ENCODE measurements at regions of chr20 and their contacts with region 1.

Region 1: DNA sequence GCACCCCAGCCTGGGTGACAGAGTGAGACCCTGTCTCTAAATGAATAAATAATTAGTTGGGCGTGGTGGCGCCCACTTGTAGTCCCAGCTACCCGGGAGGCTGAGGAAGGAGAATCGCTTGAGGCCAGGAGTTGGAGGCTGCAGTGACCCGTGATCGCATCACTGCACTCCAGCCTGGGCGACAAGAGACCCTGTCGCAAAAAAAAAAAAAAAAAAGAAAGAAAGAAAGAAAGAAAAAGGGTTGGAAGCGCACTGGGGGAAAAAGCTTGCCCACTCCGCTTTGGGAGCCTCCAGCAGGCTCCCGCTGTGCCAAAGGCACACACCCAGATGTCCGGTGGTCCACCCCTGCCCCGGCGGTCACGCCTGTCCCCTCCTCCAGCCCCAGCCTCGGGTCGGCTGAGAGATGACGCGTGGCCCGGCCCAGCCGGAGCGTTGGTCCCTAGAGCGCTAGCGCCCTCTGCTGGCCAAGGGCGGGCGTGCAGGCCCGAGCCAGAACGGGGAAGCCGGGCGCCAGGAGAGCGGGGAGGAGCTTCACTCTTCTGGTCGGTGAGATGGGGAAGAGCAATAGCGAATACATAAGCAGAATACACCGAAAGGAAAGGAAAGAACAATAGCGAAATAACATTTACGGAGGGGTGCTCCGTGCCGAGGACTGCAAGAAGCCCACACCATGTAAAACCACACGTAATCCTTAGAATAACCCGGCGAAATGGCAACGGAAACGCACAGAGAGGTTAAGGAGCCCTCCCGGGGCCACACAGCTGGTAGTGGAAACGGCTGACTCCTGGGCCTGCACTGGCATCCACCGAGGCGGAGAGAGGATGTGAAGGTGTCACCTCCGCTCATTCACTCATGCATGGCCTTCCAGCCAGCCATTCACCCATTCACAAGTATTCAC is 41.7 kb downstream of the UBE2V1 start:
- DNase-seq: no peak
- ATAC-seq: peak; percentile 99
- H3K4me3 ChIP-seq: peak overlapping the region; percentile 37; the same call in 1 of the 2 replicates
- H3K27ac ChIP-seq: no peak overlapping the region
- H3K4me1 ChIP-seq: peaks cover 5% of the 10 kb centered on the region
- H3K27me3 ChIP-seq: no peaks in the 10 kb centered on the region
- CTCF ChIP-seq: peak; percentile 99; a peak in 5 of 6 replicates
- EP300 ChIP-seq: no peak
- POLR2A ChIP-seq: no peak
- RAD21 ChIP-seq: peak; percentile 99

Region 2: GRCh38 chr20:49973995-49974394 is 97.2 kb before region 1 on chr20:
- CTCF ChIA-PET with region 1: interaction called, 369 read pairs
- POLR2A ChIA-PET with region 1: no interaction called
- RAD21 ChIA-PET with region 1: interaction called, 234 read pairs
- SMC1A ChIA-PET with region 1: interaction called, 93 read pairs
- in situ Hi-C with region 1: no loop called
- intact Hi-C with region 1: loop called (anchors 1 kb)
- DNase-seq: no peak
- ATAC-seq: no peak
- H3K4me3 ChIP-seq: no peak overlapping the region
- H3K27ac ChIP-seq: no peak overlapping the region
- H3K4me1 ChIP-seq: no peaks in the 10 kb centered on the region
- H3K27me3 ChIP-seq: no peaks in the 10 kb centered on the region
- CTCF ChIP-seq: no peak
- EP300 ChIP-seq: no peak
- POLR2A ChIP-seq: no peak
- RAD21 ChIP-seq: no peak

Region 3: DNA sequence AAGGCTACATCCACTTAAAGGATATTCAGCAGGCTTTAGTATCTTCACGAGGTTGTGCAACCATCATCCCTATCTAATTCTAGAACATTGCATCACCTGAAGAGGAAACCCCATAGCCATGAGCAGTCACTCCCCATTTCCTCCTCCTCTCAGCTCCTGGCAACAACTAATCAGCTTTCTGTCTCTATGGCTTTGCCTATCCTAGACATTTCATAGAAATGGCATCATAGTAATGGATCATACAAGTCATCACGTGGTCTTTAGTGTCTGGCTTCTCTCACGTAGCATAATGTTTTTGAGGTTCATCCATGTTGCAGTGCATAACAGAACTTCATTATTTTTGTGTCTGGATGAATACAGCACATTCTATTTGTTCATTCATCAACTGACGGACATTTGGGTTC is 68.0 kb before region 1 on chr20:
- CTCF ChIA-PET with region 1: interaction called, 19 read pairs
- POLR2A ChIA-PET with region 1: interaction called, 3 read pairs
- RAD21 ChIA-PET with region 1: interaction called, 40 read pairs
- SMC1A ChIA-PET with region 1: interaction called, 6 read pairs
- in situ Hi-C with region 1: no loop called
- intact Hi-C with region 1: no loop called
- DNase-seq: no peak
- ATAC-seq: no peak
- H3K4me3 ChIP-seq: no peak overlapping the region
- H3K27ac ChIP-seq: no peak overlapping the region
- H3K4me1 ChIP-seq: peaks cover 13% of the 10 kb centered on the region
- H3K27me3 ChIP-seq: no peaks in the 10 kb centered on the region
- CTCF ChIP-seq: no peak
- EP300 ChIP-seq: no peak
- POLR2A ChIP-seq: no peak
- RAD21 ChIP-seq: no peak

Region 4: DNA sequence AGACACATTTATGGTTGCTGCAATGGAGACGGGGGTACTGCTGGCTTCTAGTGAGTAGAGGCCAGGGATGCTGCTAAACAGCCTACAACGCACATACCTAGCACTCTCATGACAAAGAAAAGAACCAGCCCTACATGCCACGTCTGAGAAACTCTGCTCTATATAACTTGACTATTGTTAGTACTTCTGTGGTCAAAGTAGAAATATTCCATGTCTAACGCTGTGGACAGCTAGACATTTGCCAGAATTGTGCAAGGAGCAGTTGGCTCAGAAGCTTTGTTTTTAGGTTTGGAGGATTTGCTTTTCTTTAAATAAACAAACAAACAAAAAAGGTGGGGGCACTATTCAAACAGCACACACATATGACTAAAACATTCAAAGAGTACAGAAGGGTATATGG is 21.2 kb after region 1 on chr20:
- CTCF ChIA-PET with region 1: interaction called, 15 read pairs
- POLR2A ChIA-PET with region 1: no interaction called
- RAD21 ChIA-PET with region 1: interaction called, 5 read pairs
- SMC1A ChIA-PET with region 1: interaction called, 3 read pairs
- in situ Hi-C with region 1: no loop called
- intact Hi-C with region 1: no loop called
- DNase-seq: no peak
- ATAC-seq: no peak
- H3K4me3 ChIP-seq: no peak overlapping the region
- H3K27ac ChIP-seq: no peak overlapping the region
- H3K4me1 ChIP-seq: no peaks in the 10 kb centered on the region
- H3K27me3 ChIP-seq: no peaks in the 10 kb centered on the region
- CTCF ChIP-seq: no peak
- EP300 ChIP-seq: no peak
- POLR2A ChIP-seq: no peak
- RAD21 ChIP-seq: no peak

Region 5: GRCh38 chr20:50138479-50139393 is 67.5 kb after region 1 on chr20:
- CTCF ChIA-PET with region 1: no interaction called
- POLR2A ChIA-PET with region 1: no interaction called
- RAD21 ChIA-PET with region 1: no interaction called
- SMC1A ChIA-PET with region 1: no interaction called
- in situ Hi-C with region 1: no loop called
- intact Hi-C with region 1: no loop called
- DNase-seq: no peak
- ATAC-seq: no peak
- H3K4me3 ChIP-seq: no peak overlapping the region
- H3K27ac ChIP-seq: no peak overlapping the region
- H3K4me1 ChIP-seq: no peaks in the 10 kb centered on the region
- H3K27me3 ChIP-seq: no peaks in the 10 kb centered on the region
- CTCF ChIP-seq: no peak
- EP300 ChIP-seq: no peak
- POLR2A ChIP-seq: no peak
- RAD21 ChIP-seq: no peak

Region 6: GRCh38 chr20:50165684-50166554 is 94.7 kb after region 1 on chr20:
- CTCF ChIA-PET with region 1: interaction called, 37 read pairs
- POLR2A ChIA-PET with region 1: no interaction called
- RAD21 ChIA-PET with region 1: interaction called, 11 read pairs
- SMC1A ChIA-PET with region 1: interaction called, 8 read pairs
- in situ Hi-C with region 1: no loop called
- intact Hi-C with region 1: loop called (anchors 5 kb)
- DNase-seq: peak; percentile 82
- ATAC-seq: peak; percentile 99
- H3K4me3 ChIP-seq: peak overlapping the region; percentile 40
- H3K27ac ChIP-seq: peak overlapping the region; percentile 57
- H3K4me1 ChIP-seq: peaks cover 6% of the 10 kb centered on the region; the same call in 1 of the 2 replicates
- H3K27me3 ChIP-seq: no peaks in the 10 kb centered on the region
- CTCF ChIP-seq: no peak
- EP300 ChIP-seq: peak in 1 of 2 experiments; percentile 43; a peak in 1 of 4 replicates
- POLR2A ChIP-seq: peak; percentile 79
- RAD21 ChIP-seq: no peak